ENCODE measurements at regions of chr14 and their contacts with region 1.

Region 1: DNA sequence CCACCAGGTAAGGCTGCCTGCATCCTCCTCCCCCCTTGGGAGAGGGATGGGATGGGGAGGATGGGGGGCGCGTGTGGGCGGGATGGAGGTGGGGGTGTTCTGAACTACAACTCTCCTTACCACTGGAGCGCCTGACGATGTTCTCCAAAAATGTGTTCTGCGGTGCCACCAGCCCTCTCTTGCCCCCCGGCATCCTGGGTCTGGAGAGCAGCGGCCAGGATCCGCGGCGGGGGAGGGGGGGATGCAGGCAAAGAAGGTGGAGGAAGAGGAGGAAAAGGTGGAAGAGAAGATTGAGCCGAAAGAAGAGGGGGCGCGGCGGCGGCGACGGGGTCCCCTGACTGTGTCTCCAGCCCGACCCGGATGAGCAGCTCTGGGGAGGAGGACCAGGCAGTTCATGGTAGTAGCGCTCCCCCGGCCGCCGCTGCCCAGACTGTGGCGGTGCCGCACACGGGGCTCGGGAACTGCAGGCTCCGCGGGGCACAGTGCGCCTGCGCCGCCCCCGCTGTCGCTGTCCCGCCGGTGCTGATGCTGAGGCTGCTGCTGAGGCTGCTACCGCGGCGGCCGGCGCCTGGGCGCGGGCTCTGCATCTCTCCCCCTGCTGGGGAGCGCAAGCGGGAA is at the start of gene KCNH5:
- ATAC-seq: peak; percentile 28 to 93 (median 92)
- H3K4me3 ChIP-seq: peak within 1 kb of the TSS; percentile 54 to 86 (median 56)
- H3K27ac ChIP-seq: peak within 1 kb of the TSS; percentile 2
- H3K4me1 ChIP-seq: peaks cover 0 to 2% of the 10 kb centered on the region in 2 donors
- total RNA-seq, gene KCNH5: 0.10 to 2.1 (median 0.43) TPM in 7 of 8 experiments, not detected in the other

Region 2: DNA sequence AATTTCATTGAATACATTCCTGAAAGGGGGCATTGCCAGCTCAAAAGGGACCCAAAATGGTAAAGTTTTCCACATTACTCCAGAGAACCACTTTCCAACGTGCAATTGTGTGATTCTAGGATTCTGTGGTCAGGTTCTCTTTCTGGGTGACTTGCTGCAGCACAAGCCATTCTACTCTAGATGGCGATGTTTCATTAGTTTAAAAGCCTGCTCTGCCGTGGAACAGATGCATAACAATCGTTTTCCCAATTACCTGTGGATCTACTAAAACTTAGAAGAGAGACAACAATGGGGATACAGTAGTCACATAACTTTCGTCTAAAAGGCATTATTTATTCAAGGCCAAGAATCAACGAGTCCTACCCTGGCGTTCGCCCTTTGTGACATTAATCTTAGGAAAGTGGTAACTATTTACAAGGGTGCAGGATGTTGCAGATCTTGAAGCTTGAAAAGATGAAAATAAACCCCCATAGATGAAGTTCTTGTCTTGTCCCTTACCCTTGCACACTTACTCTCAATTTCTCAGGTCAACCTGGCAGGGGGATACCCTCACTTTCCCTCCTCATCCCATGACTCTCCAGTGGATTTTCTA is 882.0 kb before region 1 on chr14:
- in situ Hi-C with region 1: loop called in 1 of 9 experiments (anchors 25 kb)
- ATAC-seq: peak in 6 of 8 experiments; percentile 55 to 76 (median 64)
- H3K4me3 ChIP-seq: no peak overlapping the region
- H3K27ac ChIP-seq: no peak overlapping the region
- H3K4me1 ChIP-seq: no peaks in the 10 kb centered on the region

Region 3: DNA sequence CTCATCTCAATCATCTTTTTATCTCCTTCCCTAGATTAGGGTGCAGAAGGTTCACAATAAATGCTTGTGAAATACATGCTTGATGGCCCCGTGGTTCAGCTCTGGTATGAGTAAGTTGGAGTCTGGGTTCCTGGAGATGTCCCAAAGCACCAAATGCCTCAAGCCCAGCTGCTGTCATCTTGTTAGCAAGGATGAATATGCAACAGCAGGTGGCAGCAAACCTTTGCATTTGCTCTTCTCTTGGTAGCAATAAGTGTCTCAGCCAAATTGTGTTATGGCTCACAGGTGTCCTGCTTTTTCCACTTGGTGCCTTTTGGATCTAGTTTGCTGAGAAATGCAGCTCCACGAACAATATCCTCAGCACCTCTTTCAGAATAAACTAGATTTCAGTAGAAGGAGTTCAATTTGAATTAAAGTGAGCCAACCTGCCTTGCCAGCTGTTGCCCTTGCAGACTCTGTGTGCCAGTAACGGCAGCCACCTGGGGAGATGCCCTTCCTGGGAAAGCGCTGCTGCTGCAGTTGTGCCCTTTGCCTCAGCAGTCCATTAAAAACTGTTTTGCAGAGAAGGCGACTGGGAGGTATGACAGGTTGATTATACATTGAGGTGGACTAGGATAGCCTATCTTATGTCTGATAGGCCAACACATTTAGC is 865.6 kb before region 1 on chr14:
- in situ Hi-C with region 1: loop called in 4 of 9 experiments (anchors 25 kb)
- ATAC-seq: peak; percentile 47 to 91 (median 63)
- H3K4me3 ChIP-seq: no peak overlapping the region
- H3K27ac ChIP-seq: no peak overlapping the region
- H3K4me1 ChIP-seq: no peaks in the 10 kb centered on the region

Region 4: DNA sequence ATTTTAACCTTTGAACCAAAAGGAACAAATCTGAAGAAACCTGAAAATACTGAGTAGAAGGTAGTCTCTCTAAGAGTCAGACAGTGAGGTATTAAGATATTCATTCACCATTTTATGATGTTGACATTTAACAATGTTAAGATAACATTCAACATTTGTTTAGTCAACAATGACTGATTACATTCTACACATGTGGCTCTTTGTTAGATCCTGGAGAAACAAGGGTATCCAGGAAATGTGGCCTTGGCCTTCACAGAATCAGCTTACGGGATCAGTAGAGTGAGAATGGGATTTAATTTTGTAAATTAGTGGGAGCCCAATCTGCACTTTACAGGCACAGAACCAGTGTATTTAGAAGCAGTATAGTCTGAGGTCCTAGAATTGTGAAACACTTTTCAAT is 355.4 kb before region 1 on chr14:
- in situ Hi-C with region 1: no loop called
- ATAC-seq: no peak
- H3K4me3 ChIP-seq: no peak overlapping the region
- H3K27ac ChIP-seq: no peak overlapping the region
- H3K4me1 ChIP-seq: peaks cover 5 to 11% of the 10 kb centered on the region in 2 donors

Region 5: DNA sequence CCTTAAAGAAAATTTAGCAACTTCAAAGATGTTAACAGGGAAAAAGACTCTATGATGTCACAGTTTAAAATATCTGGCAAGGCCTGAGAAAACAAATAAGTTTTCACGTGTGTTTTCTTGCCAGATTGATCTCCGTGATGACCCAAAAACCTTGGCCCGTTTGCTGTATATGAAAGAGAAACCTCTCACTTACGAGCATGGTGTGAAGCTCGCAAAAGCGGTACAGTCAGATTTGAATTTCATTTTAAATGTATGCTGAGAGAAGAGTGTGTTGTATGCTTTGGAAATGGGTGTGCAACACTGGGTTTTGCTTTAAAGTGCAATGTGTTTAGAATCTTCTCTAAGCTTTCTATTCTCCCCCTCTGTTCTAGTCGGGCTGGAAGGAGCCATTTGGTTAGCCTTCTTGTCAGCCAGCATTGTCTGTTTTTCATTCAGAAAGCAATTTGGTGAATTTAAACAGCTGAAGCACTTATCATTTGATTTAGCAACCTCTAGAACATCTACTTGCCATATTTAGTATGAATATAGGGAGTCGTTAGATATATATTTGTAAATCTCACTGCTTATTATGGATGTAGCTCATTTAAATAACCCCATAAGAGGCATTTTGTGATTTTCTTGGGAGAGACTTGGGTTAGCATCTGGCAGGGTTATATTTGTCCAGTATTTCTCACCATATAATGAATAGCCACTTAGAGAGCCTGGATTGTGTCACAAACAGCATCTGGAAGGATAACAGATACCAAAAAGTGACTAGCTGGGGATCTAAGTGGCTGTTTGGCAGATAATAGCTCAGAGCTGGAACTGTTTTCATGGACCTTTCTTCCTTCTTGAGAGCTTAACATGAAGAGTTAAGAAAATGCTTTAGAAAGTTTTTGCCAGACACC is 238.1 kb after region 1 on chr14:
- in situ Hi-C with region 1: no loop called
- ATAC-seq: peak in 2 of 8 experiments; percentile 53 to 56
- H3K4me3 ChIP-seq: no peak overlapping the region
- H3K27ac ChIP-seq: no peak overlapping the region
- H3K4me1 ChIP-seq: no peaks in the 10 kb centered on the region

Region 6: DNA sequence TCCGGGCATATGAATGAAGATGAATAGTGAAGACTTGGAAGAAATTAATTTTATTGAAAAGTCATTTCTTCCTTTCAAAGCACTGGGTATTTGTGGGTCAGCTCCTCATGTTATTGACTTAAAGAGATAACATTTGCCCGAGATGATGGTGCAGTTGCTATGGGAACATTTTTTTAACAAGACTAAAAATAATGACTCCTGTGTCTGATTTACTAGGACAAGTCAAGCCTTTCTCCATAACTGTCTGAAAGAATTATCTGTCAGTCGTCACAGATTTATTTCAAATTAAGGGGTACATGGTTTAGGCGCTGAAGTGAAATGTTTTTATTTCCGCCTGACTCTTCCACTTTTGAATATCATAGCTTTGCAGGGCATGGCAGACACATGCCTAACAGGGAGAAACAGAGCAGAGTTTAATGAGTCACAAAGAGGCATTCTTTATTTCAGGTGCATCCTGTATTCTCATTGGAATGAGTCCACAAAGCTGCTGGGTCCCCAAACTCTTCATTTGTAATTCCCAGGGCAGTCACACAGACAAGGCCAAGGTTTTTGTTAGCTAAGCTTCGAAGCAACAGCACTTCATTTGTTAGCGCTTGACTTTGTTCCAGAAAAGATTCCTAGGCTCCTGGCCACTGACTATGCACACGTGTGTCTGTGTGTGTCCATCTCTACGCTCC is 277.9 kb after region 1 on chr14:
- in situ Hi-C with region 1: no loop called
- ATAC-seq: peak; percentile 12 to 84 (median 64)
- H3K4me3 ChIP-seq: no peak overlapping the region
- H3K27ac ChIP-seq: no peak overlapping the region
- H3K4me1 ChIP-seq: peaks cover 7 to 28% of the 10 kb centered on the region in 2 donors